Sigmoid colon (tissue), 7 donors: ENCODE measurements at regions of chr2 and their contacts with region 1.

Region 1: DNA sequence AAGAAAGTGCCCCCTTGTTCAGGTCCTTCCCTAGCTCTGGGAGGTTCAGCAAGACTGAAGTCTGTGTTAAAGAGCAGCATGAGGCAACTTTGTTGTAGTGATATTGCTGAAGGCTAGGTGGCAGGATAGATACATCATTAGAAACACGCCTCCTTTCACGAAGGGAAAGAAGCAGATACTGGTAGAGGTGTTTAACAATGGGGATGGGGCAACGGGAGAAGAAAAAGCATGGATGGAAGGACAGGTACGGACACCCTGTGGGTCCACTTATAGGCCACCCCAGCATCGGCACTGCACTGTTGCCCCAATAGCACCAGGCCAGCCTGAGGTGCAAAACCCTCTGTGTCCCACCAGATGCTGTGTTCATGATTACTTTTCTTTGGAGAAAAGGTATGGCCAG is 3.5 kb upstream of the IGFBP5 start:
- DNase-seq: peak; percentile 63
- H3K4me3 ChIP-seq: no peak overlapping the region
- H3K27ac ChIP-seq: peak overlapping the region; percentile 85 to 93 (median 92)
- H3K4me1 ChIP-seq: peaks cover 0 to 75% (median 71%) of the 10 kb centered on the region in 4 donors
- H3K27me3 ChIP-seq: no peaks in the 10 kb centered on the region
- CTCF ChIP-seq: peak; percentile 46 to 63 (median 53)
- EP300 ChIP-seq: no peak
- POLR2A ChIP-seq: no peak

Region 2: GRCh38 chr2:216031960-216032689 is 666.8 kb before region 1 on chr2:
- intact Hi-C with region 1: no loop called
- DNase-seq: no peak
- H3K4me3 ChIP-seq: no peak overlapping the region
- H3K27ac ChIP-seq: no peak overlapping the region
- H3K4me1 ChIP-seq: no peaks in the 10 kb centered on the region
- H3K27me3 ChIP-seq: no peaks in the 10 kb centered on the region
- CTCF ChIP-seq: no peak
- EP300 ChIP-seq: no peak
- POLR2A ChIP-seq: no peak

Region 3: DNA sequence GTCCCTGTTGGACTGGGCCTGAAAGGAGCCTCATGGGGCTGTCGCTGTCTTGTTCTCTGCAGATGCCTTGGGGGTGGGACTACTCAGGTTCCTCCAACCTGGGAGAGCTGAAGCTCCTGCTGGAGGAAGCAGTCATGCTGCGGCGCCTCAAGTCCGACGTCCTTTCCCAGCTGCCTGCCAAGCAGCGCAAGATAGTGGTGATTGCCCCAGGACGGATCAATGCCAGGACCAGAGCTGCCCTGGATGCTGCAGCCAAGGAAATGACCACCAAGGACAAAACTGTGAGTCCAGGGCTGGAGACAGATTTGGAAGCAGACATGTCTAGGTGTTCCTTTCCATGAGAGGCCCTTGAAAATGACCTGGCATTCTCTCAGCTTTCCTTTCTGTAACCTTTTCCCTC is 248.1 kb before region 1 on chr2:
- intact Hi-C with region 1: no loop called
- DNase-seq: no peak
- H3K4me3 ChIP-seq: no peak overlapping the region
- H3K27ac ChIP-seq: no peak overlapping the region
- H3K4me1 ChIP-seq: no peaks in the 10 kb centered on the region
- H3K27me3 ChIP-seq: no peaks in the 10 kb centered on the region
- CTCF ChIP-seq: no peak
- EP300 ChIP-seq: no peak
- POLR2A ChIP-seq: no peak

Region 4: DNA sequence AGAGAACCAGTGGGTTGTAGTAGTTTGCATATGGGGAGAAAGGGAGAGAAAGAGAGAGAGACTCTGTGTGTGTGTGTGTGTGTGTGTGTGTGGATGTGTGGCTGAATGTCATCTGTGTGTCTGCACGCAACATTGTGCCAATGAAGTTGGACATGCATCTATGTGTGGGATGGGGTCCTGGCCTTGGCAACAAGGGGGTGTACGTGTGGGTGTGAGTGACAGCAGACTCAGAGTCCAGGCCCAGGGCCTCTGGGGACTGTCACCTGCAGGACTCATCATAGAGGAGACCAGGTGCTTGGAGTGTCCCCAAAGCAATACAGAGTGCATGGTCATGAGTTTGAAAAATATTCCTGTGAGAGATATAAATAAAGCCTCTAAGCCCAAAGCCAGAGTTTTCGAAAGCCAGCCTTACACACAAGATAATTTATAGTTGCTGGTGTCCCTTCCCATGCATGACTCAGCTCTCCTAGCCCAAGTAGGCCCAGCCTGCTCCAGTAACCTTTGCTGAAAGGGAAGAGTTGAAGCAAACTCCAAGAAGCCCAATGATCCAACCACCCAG is 101.1 kb after region 1 on chr2:
- intact Hi-C with region 1: loop called (anchors 5 kb)
- DNase-seq: peak; percentile 91
- H3K4me3 ChIP-seq: no peak overlapping the region
- H3K27ac ChIP-seq: peak overlapping the region; percentile 34 to 82 (median 77)
- H3K4me1 ChIP-seq: peaks cover 0 to 46% (median 22%) of the 10 kb centered on the region in 4 donors
- H3K27me3 ChIP-seq: no peaks in the 10 kb centered on the region
- CTCF ChIP-seq: no peak
- EP300 ChIP-seq: peak in 2 of 4 donors; percentile 48 to 59
- POLR2A ChIP-seq: no peak

Region 5: GRCh38 chr2:216974321-216975302 is 275.7 kb after region 1 on chr2:
- intact Hi-C with region 1: loop called (anchors 10 kb)
- DNase-seq: peak; percentile 64
- H3K4me3 ChIP-seq: no peak overlapping the region
- H3K27ac ChIP-seq: peak overlapping the region; percentile 51 to 71 (median 62)
- H3K4me1 ChIP-seq: peaks cover 0 to 21% (median 16%) of the 10 kb centered on the region in 4 donors
- H3K27me3 ChIP-seq: no peaks in the 10 kb centered on the region
- CTCF ChIP-seq: no peak
- EP300 ChIP-seq: no peak
- POLR2A ChIP-seq: no peak

Region 6: DNA sequence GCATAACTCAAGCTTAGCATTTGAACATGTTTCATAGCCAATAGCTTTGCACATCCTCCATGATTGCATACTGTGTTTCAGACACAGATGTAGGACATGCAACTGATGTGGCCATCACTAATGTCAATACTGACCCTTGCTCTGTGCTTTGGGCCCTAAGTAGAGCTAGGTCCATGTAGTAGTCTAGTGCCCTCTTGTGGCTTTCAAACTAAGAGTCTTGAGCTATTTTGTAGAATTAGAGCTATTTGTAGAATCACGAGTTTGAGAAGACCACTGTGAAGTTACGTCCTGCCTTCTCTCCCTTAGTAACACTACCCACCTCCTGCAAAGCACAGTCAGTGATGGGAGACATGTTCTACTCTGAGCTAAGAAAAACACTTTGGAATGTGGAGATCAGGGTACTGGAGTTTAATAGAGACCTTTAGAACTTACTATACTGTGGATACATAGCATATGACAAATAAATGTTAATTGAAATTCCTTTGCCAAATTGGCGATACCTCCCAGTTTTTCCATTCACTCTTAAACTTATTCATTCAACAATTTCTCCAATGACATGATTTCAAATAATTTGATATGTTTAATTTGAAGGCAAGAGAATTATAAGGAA is 467.5 kb after region 1 on chr2:
- intact Hi-C with region 1: loop called (anchors 2 kb)
- DNase-seq: no peak
- H3K4me3 ChIP-seq: no peak overlapping the region
- H3K27ac ChIP-seq: no peak overlapping the region
- H3K4me1 ChIP-seq: peaks cover 0 to 24% (median 11%) of the 10 kb centered on the region in 4 donors
- H3K27me3 ChIP-seq: no peaks in the 10 kb centered on the region
- CTCF ChIP-seq: peak in 3 of 4 experiments; percentile 30 to 50 (median 32)
- EP300 ChIP-seq: no peak
- POLR2A ChIP-seq: no peak

Region 7: GRCh38 chr2:217713395-217714286 is 1014.7 kb after region 1 on chr2:
- intact Hi-C with region 1: loop called (anchors 5 kb)
- DNase-seq: peak; percentile 91
- H3K4me3 ChIP-seq: no peak overlapping the region
- H3K27ac ChIP-seq: peak overlapping the region; percentile 50 to 76 (median 72)
- H3K4me1 ChIP-seq: peaks cover 0 to 48% (median 43%) of the 10 kb centered on the region in 4 donors
- H3K27me3 ChIP-seq: no peaks in the 10 kb centered on the region
- CTCF ChIP-seq: peak; percentile 93 to 99 (median 95)
- EP300 ChIP-seq: no peak
- POLR2A ChIP-seq: no peak